ENCODE measurements at regions of chrX and their contacts with region 1.

Region 1: DNA sequence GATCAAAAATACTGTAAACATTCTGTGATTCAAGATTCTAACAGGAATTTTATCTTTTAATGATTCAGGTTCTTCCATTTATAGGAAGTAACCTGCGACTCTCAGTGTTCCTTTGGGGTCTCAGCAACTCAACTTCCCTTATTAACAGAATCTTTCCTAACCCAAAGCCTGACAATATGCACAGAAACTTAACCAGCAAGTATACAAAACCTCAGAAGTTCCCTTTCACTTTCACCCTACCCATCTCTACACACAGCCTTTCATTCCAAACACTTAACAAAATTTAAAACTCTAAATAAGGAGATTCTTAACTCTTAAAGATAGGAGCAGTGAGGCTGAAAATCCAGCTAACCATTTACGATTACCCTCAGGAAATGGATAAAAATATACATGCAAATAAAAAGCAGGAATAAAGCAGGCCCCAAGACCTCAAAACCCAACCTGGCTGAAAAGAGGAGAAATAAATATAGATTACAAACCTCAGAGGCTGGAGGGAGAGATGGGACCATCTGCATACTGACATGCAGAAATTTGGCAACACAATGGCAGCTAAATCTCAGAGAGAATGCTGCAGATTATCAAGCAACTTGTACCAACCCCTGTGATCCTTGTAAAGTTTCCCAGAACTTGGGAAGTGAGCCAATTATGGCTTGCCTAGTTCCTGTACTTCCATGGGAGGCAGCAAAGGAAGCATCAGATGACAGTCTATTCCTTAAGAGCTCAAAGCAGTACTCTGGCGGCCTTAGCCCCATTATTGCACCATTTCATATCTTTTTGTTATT is 101.0 kb downstream of the ATP11C start:
- DNase-seq: peak in 1 of 5 donors; percentile 13
- ATAC-seq: peak in 3 of 4 donors; percentile 45 to 70 (median 55)
- H3K4me3 ChIP-seq: no peak overlapping the region
- H3K27ac ChIP-seq: peak overlapping the region in 2 of 12 donors; percentile 14 to 18
- H3K4me1 ChIP-seq: peaks cover 0 to 45% (median 12%) of the 10 kb centered on the region in 12 donors
- H3K27me3 ChIP-seq: no peaks in the 10 kb centered on the region
- CTCF ChIP-seq: no peak
- POLR2A ChIP-seq: no peak

Region 2: DNA sequence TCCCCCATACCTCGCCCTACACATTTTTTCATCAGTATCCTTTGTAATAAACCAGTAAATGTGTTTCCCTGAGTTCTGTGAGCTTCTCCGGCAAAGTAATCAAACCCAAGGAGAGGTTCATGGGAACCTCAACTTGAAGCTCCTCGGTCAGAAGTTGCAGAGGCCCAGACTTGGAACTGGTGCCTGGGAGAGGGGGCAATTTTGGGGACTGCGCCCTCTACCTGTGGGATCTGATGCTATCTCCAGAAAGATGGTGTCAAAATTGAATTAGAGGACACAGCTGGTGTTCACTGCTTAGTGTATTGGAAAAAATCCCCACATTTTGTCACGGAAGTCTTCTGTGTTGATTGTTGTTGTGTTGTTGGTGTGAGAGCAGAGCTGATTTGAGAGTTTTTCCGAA is 30.4 kb after region 1 on chrX:
- intact Hi-C with region 1: loop called in 1 of 10 experiments (anchors 1 kb)
- DNase-seq: no peak
- ATAC-seq: no peak
- H3K4me3 ChIP-seq: no peak overlapping the region
- H3K27ac ChIP-seq: no peak overlapping the region
- H3K4me1 ChIP-seq: no peaks in the 10 kb centered on the region
- H3K27me3 ChIP-seq: no peaks in the 10 kb centered on the region
- CTCF ChIP-seq: no peak
- POLR2A ChIP-seq: no peak

Region 3: DNA sequence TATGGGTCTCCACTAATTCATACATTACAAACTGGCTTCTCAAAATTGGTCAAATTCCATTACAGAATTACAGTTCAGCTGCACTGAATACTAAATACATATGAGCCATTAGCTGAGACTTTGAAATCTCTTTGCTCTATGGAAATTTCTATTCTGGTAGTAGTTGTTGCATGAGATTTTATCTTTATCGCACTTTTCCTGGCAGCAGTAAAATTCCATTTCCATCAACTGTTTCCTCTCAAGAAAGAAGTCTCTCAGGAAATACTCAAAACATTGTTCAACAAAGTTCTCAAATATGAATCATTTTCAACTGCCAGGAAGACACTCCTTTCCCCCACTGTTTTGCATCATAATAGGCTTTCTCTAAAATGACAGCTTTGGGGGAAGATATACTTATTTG is 49.7 kb after region 1 on chrX:
- intact Hi-C with region 1: loop called in 1 of 10 experiments (anchors 10 kb)
- DNase-seq: no peak
- ATAC-seq: peak in 2 of 4 donors; percentile 41
- H3K4me3 ChIP-seq: peak overlapping the region in 1 of 12 donors; percentile 2
- H3K27ac ChIP-seq: peak overlapping the region in 9 of 12 donors; percentile 34 to 71 (median 53)
- H3K4me1 ChIP-seq: peaks cover 0 to 20% (median 5%) of the 10 kb centered on the region in 12 donors
- H3K27me3 ChIP-seq: peaks cover 0 to 3% (median 0%) of the 10 kb centered on the region in 9 donors
- CTCF ChIP-seq: no peak
- POLR2A ChIP-seq: no peak

Measured in heart left ventricle (tissue), 16 donors.